Activated naive CD8-positive, alpha-beta T cell treated with anti-CD3 and anti-CD28 coated beads, Interleukin-2, amount 10 ng/mL, durations not matched to agents 7 days and 5 days (primary cell): ENCODE measurements at regions of chr1 and their contacts with region 1.

Region 1: DNA sequence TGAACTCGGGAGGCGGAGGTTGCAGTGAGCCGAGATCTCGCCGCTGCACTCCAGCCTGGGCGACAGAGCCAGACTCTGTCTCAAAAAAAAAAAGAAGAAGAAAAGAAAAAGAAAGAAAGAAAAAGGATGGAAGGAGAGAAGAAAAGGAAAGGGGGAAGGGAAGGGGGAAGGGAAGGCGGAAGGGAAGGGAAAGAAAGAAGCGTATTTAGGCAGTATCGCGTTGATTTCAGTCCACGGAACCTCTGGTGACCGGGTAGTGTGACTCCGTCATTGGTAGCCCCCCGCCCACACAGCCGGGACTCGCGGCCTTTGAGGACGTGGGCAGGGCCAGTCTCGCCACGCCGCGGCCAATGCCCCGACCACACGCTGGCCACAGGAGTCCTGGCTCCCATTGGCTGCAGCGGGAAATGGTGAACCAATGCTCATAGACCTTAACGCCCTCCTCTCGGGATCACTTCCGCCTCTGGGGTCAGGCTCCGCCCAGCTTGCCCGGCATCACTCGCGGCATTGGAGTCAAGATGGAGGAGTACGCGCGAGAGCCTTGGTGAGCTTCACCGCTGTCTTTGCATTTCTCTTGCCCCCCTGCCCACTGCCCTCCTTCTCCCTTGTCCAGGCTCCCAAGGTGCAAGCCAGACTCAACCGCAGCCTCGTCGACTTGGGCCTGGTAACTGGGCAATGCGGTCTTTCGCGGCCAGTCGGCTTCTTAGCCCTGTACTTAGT is at the start of gene TIMM17A:
- DNase-seq: peak; percentile 96
- ATAC-seq: peak; percentile 99
- H3K4me3 Mint-ChIP-seq: peak within 1 kb of the TSS; percentile 99
- H3K27ac Mint-ChIP-seq: peak within 1 kb of the TSS; percentile 92
- H3K4me1 Mint-ChIP-seq: peaks cover 15% of the 10 kb centered on the region
- H3K27me3 Mint-ChIP-seq: peaks cover 2% of the 10 kb centered on the region
- total RNA-seq, gene TIMM17A: 34.0 to 39.5 TPM

Region 2: GRCh38 chr1:201895913-201896807 is 59.0 kb before region 1 on chr1:
- POLR2A ChIA-PET with region 1: interaction called, 10 read pairs
- DNase-seq: peak; percentile 91
- ATAC-seq: peak; percentile 90
- H3K4me3 Mint-ChIP-seq: peak overlapping the region; percentile 64
- H3K27ac Mint-ChIP-seq: peak overlapping the region; percentile 75
- H3K4me1 Mint-ChIP-seq: peaks cover 10% of the 10 kb centered on the region
- H3K27me3 Mint-ChIP-seq: peaks cover 23% of the 10 kb centered on the region

Region 3: DNA sequence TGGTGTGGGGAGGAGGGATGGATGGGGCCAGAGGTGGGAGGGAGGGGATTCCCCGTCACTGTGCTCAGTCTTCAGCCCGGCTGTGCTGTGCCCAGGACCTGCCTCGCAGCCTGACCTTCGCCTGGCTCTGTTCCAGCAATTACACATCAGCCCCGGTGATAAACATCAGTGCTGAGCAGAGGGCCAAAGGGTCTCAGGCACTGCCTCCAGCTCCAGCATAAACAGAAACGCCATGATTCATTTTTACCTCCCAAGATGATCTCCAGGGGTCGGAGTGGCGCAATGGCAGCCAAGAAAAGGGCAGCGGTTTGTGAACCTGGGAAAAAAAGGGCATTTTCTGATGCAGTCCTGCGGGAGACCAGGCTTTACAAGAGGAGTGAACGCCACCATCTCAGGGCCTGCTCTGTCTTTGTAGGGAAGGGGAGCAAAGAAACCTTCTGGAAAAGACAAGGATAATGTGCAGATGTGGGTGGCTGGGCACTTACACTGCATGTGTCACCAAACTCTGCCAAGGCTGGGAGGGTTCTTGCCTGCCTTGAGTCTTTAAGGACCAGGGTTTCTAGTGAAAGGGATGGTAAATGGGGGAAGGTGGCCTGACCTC is 38.4 kb before region 1 on chr1:
- POLR2A ChIA-PET with region 1: no interaction called
- DNase-seq: no peak
- ATAC-seq: no peak
- H3K4me3 Mint-ChIP-seq: no peak overlapping the region
- H3K27ac Mint-ChIP-seq: no peak overlapping the region
- H3K4me1 Mint-ChIP-seq: peaks cover 2% of the 10 kb centered on the region
- H3K27me3 Mint-ChIP-seq: peaks cover 14% of the 10 kb centered on the region

Region 4: GRCh38 chr1:201933840-201934430 is 21.2 kb before region 1 on chr1:
- POLR2A ChIA-PET with region 1: no interaction called
- DNase-seq: no peak
- ATAC-seq: no peak
- H3K4me3 Mint-ChIP-seq: no peak overlapping the region
- H3K27ac Mint-ChIP-seq: no peak overlapping the region
- H3K4me1 Mint-ChIP-seq: no peaks in the 10 kb centered on the region
- H3K27me3 Mint-ChIP-seq: peaks cover 17% of the 10 kb centered on the region

Region 5: GRCh38 chr1:201966171-201966570 is 11.0 kb after region 1 on chr1:
- POLR2A ChIA-PET with region 1: no interaction called
- DNase-seq: no peak
- ATAC-seq: no peak
- H3K4me3 Mint-ChIP-seq: no peak overlapping the region
- H3K27ac Mint-ChIP-seq: no peak overlapping the region
- H3K4me1 Mint-ChIP-seq: no peaks in the 10 kb centered on the region
- H3K27me3 Mint-ChIP-seq: no peaks in the 10 kb centered on the region